ENCODE measurements at regions of chr19 and their contacts with region 1.

Region 1: GRCh38 chr19:18117692-18118378 is 20.3 kb downstream of the MAST3 start:
- DNase-seq: peak; percentile 99
- H3K4me3 ChIP-seq: peak overlapping the region; percentile 56 to 73
- H3K27ac ChIP-seq: peak overlapping the region in 1 of 2 experiments; percentile 24; a peak in 1 of 4 replicates
- H3K4me1 ChIP-seq: peaks cover 3 to 13% of the 10 kb centered on the region in 2 experiments; a peak in 2 of 4 replicates
- H3K27me3 ChIP-seq: no peaks in the 10 kb centered on the region
- CTCF ChIP-seq: peak; percentile 22
- EP300 ChIP-seq: no peak
- RAD21 ChIP-seq: no peak

Region 2: DNA sequence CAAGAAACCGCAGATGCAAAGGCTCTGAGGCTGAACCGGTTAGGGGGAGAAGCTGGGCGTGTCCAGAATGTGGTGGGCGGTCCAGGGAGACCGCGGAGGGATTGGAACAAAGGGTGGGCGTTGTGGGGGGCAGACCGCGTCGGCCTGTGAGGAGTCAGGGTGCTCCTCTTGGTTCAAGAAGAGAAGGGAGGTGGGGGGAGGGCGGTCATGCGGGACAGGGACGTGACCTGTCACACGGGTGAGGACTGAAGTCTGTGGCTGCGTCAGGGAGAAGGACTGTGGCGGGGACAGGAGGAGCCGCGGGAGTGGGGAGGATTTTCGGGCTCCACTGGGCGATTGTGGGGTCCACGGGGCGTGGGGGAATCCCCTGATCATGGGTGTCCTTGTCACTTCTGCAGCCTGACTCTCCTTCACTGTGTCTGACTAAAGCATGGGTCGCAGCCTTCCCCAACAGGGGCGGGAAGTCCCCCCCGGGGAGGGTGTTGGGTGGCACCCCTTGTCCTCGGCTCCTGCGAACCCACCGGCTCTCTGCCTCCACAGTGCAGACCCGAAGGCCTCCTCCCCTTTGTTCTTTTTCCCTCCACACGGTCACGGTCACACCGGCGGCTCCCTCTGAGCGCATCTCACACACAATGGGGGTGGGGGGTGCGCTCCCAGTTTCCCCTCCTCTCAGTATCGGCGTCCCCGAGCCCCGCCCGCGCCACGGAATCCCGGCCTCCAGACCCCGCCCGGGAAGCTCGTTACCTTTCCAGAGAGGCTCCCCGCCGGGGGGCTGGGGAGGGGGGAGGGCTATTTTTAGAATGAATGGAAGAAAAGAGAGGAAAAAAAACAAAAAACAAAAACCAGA is 167.3 kb before region 1 on chr19:
- CTCF ChIA-PET with region 1: no interaction called
- POLR2A ChIA-PET with region 1: no interaction called
- DNase-seq: no peak
- H3K4me3 ChIP-seq: no peak overlapping the region
- H3K27ac ChIP-seq: no peak overlapping the region
- H3K4me1 ChIP-seq: peaks cover 5 to 22% of the 10 kb centered on the region in 2 experiments; a peak in 2 of 4 replicates
- H3K27me3 ChIP-seq: peaks cover 52% of the 10 kb centered on the region
- CTCF ChIP-seq: no peak
- EP300 ChIP-seq: no peak
- RAD21 ChIP-seq: no peak

Region 3: GRCh38 chr19:18058208-18059030 is 59.4 kb before region 1 on chr19:
- CTCF ChIA-PET with region 1: no interaction called
- POLR2A ChIA-PET with region 1: no interaction called
- DNase-seq: peak; percentile 94
- H3K4me3 ChIP-seq: peak overlapping the region; percentile 24 to 51; a peak in 2 of 4 replicates
- H3K27ac ChIP-seq: peak overlapping the region in 1 of 2 experiments; percentile 48; a peak in 2 of 4 replicates
- H3K4me1 ChIP-seq: peaks cover 3 to 5% of the 10 kb centered on the region in 2 experiments; a peak in 2 of 4 replicates
- H3K27me3 ChIP-seq: no peaks in the 10 kb centered on the region
- CTCF ChIP-seq: peak; percentile 97
- EP300 ChIP-seq: no peak
- RAD21 ChIP-seq: peak; percentile 88

Region 4: GRCh38 chr19:18074190-18074589 is 43.6 kb before region 1 on chr19:
- CTCF ChIA-PET with region 1: no interaction called
- POLR2A ChIA-PET with region 1: no interaction called
- DNase-seq: peak; percentile 11
- H3K4me3 ChIP-seq: no peak overlapping the region
- H3K27ac ChIP-seq: no peak overlapping the region
- H3K4me1 ChIP-seq: no peaks in the 10 kb centered on the region
- H3K27me3 ChIP-seq: no peaks in the 10 kb centered on the region
- CTCF ChIP-seq: no peak
- EP300 ChIP-seq: no peak
- RAD21 ChIP-seq: no peak

Region 5: GRCh38 chr19:18102916-18103542 is 14.8 kb before region 1 on chr19:
- CTCF ChIA-PET with region 1: interaction called, 15 read pairs
- POLR2A ChIA-PET with region 1: no interaction called
- DNase-seq: no peak
- H3K4me3 ChIP-seq: no peak overlapping the region
- H3K27ac ChIP-seq: no peak overlapping the region
- H3K4me1 ChIP-seq: peaks cover 4 to 16% of the 10 kb centered on the region in 2 experiments; a peak in 2 of 4 replicates
- H3K27me3 ChIP-seq: no peaks in the 10 kb centered on the region
- CTCF ChIP-seq: no peak
- EP300 ChIP-seq: no peak
- RAD21 ChIP-seq: no peak

Region 6: DNA sequence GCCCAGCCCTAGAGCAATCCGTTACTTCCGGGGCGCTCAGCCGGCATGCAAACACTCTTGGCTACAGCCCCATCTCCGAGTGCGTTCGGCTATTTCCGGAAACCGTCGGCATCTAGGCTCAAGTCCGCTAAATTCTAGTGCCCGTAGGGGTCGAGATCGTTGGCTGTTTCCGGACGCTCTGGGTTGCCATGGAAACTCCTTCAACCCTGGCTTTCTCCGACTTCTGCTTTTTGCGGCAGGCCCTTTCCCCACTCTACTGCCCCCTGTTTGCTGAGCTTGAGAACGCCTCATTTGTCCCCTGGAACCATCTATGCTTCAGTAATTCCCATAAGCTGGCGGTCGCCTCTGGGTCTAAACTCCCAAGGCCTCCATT is 34.6 kb after region 1 on chr19:
- CTCF ChIA-PET with region 1: interaction called, 18 read pairs
- POLR2A ChIA-PET with region 1: no interaction called
- DNase-seq: peak; percentile 96
- H3K4me3 ChIP-seq: peak overlapping the region; percentile 89 to 93
- H3K27ac ChIP-seq: peak overlapping the region; percentile 98 to 99
- H3K4me1 ChIP-seq: peaks cover 13 to 39% of the 10 kb centered on the region in 2 experiments; a peak in 2 of 4 replicates
- H3K27me3 ChIP-seq: no peaks in the 10 kb centered on the region
- CTCF ChIP-seq: peak; percentile 71
- EP300 ChIP-seq: no peak
- RAD21 ChIP-seq: peak; percentile 44

Region 7: DNA sequence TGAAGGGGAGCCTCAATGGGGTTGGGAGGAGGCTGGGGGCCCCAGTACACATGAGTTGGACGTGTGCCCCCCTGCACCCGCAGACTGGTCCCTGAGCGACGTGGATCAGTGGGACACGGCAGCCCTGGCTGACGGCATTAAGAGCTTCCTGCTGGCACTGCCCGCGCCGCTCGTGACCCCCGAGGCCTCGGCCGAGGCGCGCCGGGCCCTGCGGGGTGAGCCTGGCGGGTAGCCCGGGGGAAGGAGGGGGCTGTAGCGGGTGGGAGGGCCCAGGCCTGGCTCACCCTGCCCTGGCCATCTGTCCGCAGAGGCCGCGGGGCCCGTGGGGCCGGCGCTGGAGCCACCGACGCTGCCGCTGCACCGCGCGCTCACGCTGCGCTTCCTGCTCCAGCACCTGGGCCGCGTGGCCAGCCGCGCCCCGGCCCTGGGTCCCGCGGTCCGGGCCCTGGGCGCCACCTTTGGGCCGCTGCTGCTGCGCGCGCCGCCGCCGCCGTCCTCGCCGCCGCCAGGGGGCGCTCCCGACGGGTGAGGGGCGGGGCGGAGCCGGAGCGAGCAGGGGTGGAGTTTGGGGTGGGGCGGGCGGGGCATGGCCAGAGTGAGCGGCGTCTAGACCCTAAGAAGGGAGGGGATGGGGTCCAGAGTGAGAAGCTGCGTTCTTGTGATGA is 43.3 kb after region 1 on chr19:
- CTCF ChIA-PET with region 1: interaction called, 78 read pairs
- POLR2A ChIA-PET with region 1: no interaction called
- DNase-seq: peak; percentile 97
- H3K4me3 ChIP-seq: peak overlapping the region in 1 of 2 experiments; percentile 10; a peak in 1 of 4 replicates
- H3K27ac ChIP-seq: peak overlapping the region in 1 of 2 experiments; percentile 71; a peak in 2 of 4 replicates
- H3K4me1 ChIP-seq: peaks cover 17 to 38% of the 10 kb centered on the region in 2 experiments; a peak in 2 of 4 replicates
- H3K27me3 ChIP-seq: no peaks in the 10 kb centered on the region
- CTCF ChIP-seq: no peak
- EP300 ChIP-seq: no peak
- RAD21 ChIP-seq: peak; percentile 24; the same call in 1 of the 2 replicates

Region 8: DNA sequence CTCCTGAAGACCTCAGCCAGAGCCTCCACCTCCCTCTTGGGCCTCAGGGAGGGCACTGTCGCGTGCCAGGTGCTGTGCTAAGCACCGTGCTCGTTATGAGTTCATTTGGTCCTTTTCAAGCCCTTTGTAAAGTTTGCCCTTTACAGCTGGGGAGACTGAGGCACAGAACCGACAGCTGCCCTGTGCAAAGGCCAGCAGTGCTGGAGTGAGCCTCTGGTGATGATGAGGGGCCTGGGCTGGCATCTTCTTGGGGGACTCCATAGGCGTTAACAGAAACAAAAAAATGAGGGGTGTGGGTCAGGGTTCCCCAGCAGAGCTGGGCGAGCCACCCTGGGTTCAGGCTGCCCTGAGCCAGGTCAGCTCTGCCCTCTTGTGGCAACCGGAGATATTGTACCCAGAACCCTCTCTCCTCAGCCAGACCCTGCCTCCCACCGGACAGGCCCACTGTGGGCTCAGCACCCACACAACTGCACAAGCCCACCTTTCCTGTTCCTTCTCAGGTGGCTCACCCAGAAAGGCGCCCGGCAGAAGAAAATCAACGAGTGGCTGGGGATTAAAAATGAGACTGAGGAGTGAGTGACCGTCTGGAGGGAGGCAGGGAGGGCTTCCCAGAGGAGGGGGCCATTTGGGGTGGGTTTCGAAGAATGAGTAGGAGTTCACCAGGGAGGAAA is 50.3 kb after region 1 on chr19:
- CTCF ChIA-PET with region 1: interaction called, 78 read pairs
- POLR2A ChIA-PET with region 1: interaction called, 3 read pairs
- DNase-seq: peak; percentile 94
- H3K4me3 ChIP-seq: no peak overlapping the region
- H3K27ac ChIP-seq: no peak overlapping the region
- H3K4me1 ChIP-seq: no peaks in the 10 kb centered on the region; a peak in 1 of 4 replicates
- H3K27me3 ChIP-seq: no peaks in the 10 kb centered on the region
- CTCF ChIP-seq: peak; percentile 70
- EP300 ChIP-seq: no peak
- RAD21 ChIP-seq: peak; percentile 77

Region 9: GRCh38 chr19:18192673-18193387 is 75.0 kb after region 1 on chr19 and contains the start of gene MPV17L2:
- CTCF ChIA-PET with region 1: interaction called, 10 read pairs
- POLR2A ChIA-PET with region 1: no interaction called
- DNase-seq: peak; percentile 93
- H3K4me3 ChIP-seq: peak within 1 kb of the TSS; percentile 72 to 94
- H3K27ac ChIP-seq: peak within 1 kb of the TSS; percentile 82 to 84
- H3K4me1 ChIP-seq: peaks cover 9 to 26% of the 10 kb centered on the region in 2 experiments; a peak in 2 of 4 replicates
- H3K27me3 ChIP-seq: no peaks in the 10 kb centered on the region
- CTCF ChIP-seq: no peak
- EP300 ChIP-seq: peak in 1 of 2 experiments; percentile 48; a peak in 1 of 4 replicates
- RAD21 ChIP-seq: no peak
- polyA plus RNA-seq, gene MPV17L2: 17.5 and 20.6 TPM in 2 replicates